Activated CD8-positive, alpha-beta T cell treated with anti-CD3 and anti-CD28 coated beads for 36 hours (primary cell): ENCODE measurements at regions of chr1 and their contacts with region 1.

Region 1: GRCh38 chr1:26602378-26602959 is 72.9 kb downstream of the RPS6KA1 start:
- DNase-seq: peak; percentile 52
- ATAC-seq: peak; percentile 71
- H3K4me3 Mint-ChIP-seq: no peak overlapping the region
- H3K27ac Mint-ChIP-seq: no peak overlapping the region
- H3K4me1 Mint-ChIP-seq: peaks cover 17% of the 10 kb centered on the region
- H3K27me3 Mint-ChIP-seq: no peaks in the 10 kb centered on the region
- CTCF ChIP-seq: peak; percentile 100

Region 2: DNA sequence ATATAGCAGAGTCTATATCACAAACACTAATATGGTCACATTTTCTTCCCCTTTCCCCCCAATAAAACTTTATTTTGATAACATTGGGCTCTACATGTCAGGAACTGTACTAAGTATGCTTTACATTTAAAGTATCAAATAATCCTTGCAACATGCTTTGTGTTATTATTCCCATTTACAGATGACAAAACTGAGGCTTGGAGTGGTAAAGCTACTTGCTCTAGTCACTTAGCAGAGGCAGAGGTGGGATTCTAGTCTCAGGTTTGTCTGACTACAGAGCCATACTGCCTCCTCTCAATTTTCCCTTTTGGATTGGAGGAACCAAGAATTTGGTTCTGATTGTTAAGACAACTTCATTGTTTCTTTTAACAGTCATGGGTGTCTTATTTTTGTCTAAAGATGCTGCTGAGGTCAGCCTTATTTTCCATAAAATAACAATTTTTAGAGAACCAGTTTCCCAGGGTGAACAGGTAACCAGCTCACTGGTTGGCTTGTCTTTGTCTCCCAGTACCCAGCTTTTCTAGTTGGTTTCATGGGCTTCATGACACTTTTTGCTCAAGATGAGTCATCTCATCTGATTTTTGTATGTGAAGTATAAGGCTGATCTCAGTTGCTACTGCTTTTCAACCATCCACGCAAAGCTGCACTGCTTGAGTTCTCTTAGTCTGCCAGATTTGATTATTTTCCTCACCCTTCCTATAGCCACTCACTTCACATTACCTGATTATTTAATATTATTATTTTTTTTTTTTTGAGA is 12.4 kb after region 1 on chr1:
- CTCF ChIA-PET with region 1: interaction called, 32 read pairs
- POLR2A ChIA-PET with region 1: interaction called, 3 read pairs
- intact Hi-C with region 1: no loop called
- DNase-seq: no peak
- ATAC-seq: no peak
- H3K4me3 Mint-ChIP-seq: no peak overlapping the region
- H3K27ac Mint-ChIP-seq: no peak overlapping the region
- H3K4me1 Mint-ChIP-seq: peaks cover 29% of the 10 kb centered on the region
- H3K27me3 Mint-ChIP-seq: no peaks in the 10 kb centered on the region
- CTCF ChIP-seq: no peak

Region 3: GRCh38 chr1:26723013-26723991 is 120.8 kb after region 1 on chr1:
- CTCF ChIA-PET with region 1: interaction called, 11 read pairs
- POLR2A ChIA-PET with region 1: no interaction called
- intact Hi-C with region 1: no loop called
- DNase-seq: peak; percentile 40
- ATAC-seq: peak; percentile 36
- H3K4me3 Mint-ChIP-seq: peak overlapping the region; percentile 7
- H3K27ac Mint-ChIP-seq: peak overlapping the region; percentile 84
- H3K4me1 Mint-ChIP-seq: peaks cover 93% of the 10 kb centered on the region
- H3K27me3 Mint-ChIP-seq: no peaks in the 10 kb centered on the region
- CTCF ChIP-seq: no peak

Region 4: GRCh38 chr1:26799479-26800142 is 197.1 kb after region 1 on chr1:
- CTCF ChIA-PET with region 1: interaction called, 26 read pairs
- POLR2A ChIA-PET with region 1: no interaction called
- intact Hi-C with region 1: no loop called
- DNase-seq: peak; percentile 62
- ATAC-seq: peak; percentile 80
- H3K4me3 Mint-ChIP-seq: peak overlapping the region; percentile 64
- H3K27ac Mint-ChIP-seq: peak overlapping the region; percentile 96
- H3K4me1 Mint-ChIP-seq: peaks cover 47% of the 10 kb centered on the region
- H3K27me3 Mint-ChIP-seq: no peaks in the 10 kb centered on the region
- CTCF ChIP-seq: no peak

Region 5: DNA sequence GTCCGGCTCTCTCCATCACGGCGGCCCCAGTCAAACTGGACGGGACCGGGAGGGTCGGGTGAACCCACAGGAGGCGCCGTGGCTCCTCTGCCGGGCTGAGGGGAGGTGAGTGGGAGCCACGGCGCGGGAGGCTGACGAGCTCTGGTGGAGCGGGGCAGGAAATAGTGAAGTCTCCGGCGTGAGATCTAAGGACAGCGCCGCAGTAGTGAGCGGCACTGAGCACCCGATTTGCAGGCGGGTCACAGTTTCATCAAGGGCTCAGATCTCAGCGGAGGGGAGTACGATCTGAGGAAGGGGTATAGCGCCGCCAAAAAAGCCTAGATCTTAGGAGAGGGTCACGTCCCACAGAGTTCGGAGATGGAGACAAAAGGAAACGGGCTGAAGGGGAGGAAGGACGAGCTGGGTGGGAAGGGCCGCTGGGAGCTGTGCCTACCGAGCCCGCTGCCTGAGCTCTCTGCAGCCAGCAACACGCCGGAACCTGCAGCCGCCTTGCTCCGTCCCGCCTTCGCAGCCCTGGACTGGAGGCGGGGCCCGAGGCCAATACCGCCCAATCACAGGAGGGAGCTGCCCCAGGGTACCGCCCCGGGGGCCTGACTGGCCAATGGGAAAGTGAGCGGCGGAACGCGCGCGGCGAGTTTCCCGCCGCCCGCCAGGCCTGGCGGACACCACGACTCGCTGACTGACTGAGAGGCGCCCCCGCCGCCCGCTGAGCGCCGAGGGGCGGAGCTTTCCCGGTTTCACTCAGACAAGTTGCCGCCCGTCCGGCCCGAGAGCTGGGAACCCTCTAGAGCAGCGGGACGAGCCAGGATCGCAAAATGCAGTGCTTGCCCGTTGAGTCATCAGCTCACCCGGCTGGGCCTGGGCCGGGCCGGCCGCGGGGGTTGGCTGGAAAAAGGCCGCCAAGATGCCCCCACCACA is 262.4 kb after region 1 on chr1:
- CTCF ChIA-PET with region 1: interaction called, 12 read pairs
- POLR2A ChIA-PET with region 1: interaction called, 5 read pairs
- intact Hi-C with region 1: no loop called
- DNase-seq: peak; percentile 95
- ATAC-seq: peak; percentile 94
- H3K4me3 Mint-ChIP-seq: peak overlapping the region; percentile 89
- H3K27ac Mint-ChIP-seq: peak overlapping the region; percentile 87
- H3K4me1 Mint-ChIP-seq: peaks cover 20% of the 10 kb centered on the region
- H3K27me3 Mint-ChIP-seq: no peaks in the 10 kb centered on the region
- CTCF ChIP-seq: no peak